PC-9 (cell line): ENCODE measurements at regions of chr16 and their contacts with region 1.

Region 1: GRCh38 chr16:11497851-11498289 is 88.8 kb downstream of the LITAF start:
- DNase-seq: peak in 1 of 2 experiments; percentile 65
- H3K4me3 ChIP-seq: no peak overlapping the region
- H3K27ac ChIP-seq: peak overlapping the region; percentile 50
- H3K4me1 ChIP-seq: peaks cover 20% of the 10 kb centered on the region
- H3K27me3 ChIP-seq: no peaks in the 10 kb centered on the region
- CTCF ChIP-seq: no peak

Region 2: GRCh38 chr16:11431915-11432465 is 65.9 kb before region 1 on chr16:
- CTCF ChIA-PET with region 1: no interaction called
- POLR2A ChIA-PET with region 1: no interaction called
- intact Hi-C with region 1: loop called (anchors 10 kb)
- DNase-seq: no peak
- H3K4me3 ChIP-seq: no peak overlapping the region
- H3K27ac ChIP-seq: no peak overlapping the region
- H3K4me1 ChIP-seq: no peaks in the 10 kb centered on the region
- H3K27me3 ChIP-seq: peaks cover 14% of the 10 kb centered on the region
- CTCF ChIP-seq: no peak